GM13977 (cell line): ENCODE measurements at regions of chr20 and their contacts with region 1.

Region 1: DNA sequence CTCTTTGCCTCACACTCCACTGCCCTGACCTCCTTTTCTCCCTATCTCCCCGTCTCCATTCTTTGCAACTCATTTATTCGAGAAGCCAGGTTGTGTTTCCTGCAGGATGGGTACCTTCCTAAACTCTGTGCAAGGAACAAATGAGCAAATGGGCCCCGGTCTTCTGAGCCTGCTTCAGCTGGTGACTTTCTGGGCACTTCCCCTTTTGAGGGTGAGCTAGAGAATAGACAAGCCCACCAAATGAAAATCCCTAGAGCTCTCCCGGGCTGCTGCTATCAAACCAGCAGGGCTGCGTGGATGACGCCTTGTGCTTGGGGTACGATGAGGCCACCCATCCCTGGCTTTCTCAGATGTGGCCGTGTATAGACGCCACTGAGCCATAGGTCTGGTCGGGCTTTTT is 91.0 kb upstream of the FOXA2 start:
- DNase-seq: no peak
- CTCF ChIP-seq: no peak

Region 2: GRCh38 chr20:22333885-22334545 is 341.3 kb before region 1 on chr20:
- in situ Hi-C with region 1: loop called (anchors 10 kb)
- DNase-seq: peak; percentile 69
- CTCF ChIP-seq: peak; percentile 79